Endothelial cell of umbilical vein (primary cell): ENCODE measurements at regions of chr2 and their contacts with region 1.

Region 1: GRCh38 chr2:172710584-172711024 is 25.0 kb upstream of the RAPGEF4 start:
- DNase-seq: peak; percentile 65
- H3K4me3 ChIP-seq: no peak overlapping the region
- H3K27ac ChIP-seq: no peak overlapping the region
- H3K4me1 ChIP-seq: no peaks in the 10 kb centered on the region
- H3K27me3 ChIP-seq: peaks cover 4 to 11% of the 10 kb centered on the region in 2 experiments
- CTCF ChIP-seq: peak; percentile 64 to 67
- POLR2A ChIP-seq: no peak

Region 2: GRCh38 chr2:172484253-172484652 is 226.4 kb before region 1 on chr2:
- CTCF ChIA-PET with region 1: interaction called, 23 read pairs
- POLR2A ChIA-PET with region 1: no interaction called
- dilution Hi-C with region 1: no loop called
- intact Hi-C with region 1: loop called (anchors 1 kb)
- DNase-seq: peak; percentile 55
- H3K4me3 ChIP-seq: no peak overlapping the region
- H3K27ac ChIP-seq: no peak overlapping the region
- H3K4me1 ChIP-seq: peaks cover 22% of the 10 kb centered on the region
- H3K27me3 ChIP-seq: no peaks in the 10 kb centered on the region
- CTCF ChIP-seq: no peak
- POLR2A ChIP-seq: no peak

Region 3: DNA sequence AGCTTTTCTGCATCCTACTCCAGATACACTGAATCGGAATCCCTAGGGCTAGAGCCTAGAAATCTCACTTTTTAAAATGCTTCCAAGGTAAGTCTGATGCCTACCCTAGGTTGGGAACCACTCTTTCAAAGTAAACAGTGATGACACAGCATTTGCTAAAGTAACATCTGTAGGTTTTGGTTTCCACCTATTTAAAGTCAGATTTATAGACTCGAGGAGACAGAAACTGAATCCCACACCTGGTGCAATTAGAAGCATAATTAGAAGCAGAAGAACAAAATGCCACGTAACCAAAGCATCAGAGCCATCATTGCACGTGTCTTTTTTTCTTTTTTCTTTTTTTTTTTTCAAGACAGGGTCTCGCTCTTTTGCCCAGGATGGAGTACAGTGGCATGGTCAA is 113.8 kb before region 1 on chr2:
- CTCF ChIA-PET with region 1: interaction called, 108 read pairs
- POLR2A ChIA-PET with region 1: no interaction called
- dilution Hi-C with region 1: no loop called
- intact Hi-C with region 1: loop called (anchors 1 kb)
- DNase-seq: no peak
- H3K4me3 ChIP-seq: no peak overlapping the region
- H3K27ac ChIP-seq: no peak overlapping the region
- H3K4me1 ChIP-seq: peaks cover 10% of the 10 kb centered on the region
- H3K27me3 ChIP-seq: no peaks in the 10 kb centered on the region
- CTCF ChIP-seq: no peak
- POLR2A ChIP-seq: no peak

Region 4: DNA sequence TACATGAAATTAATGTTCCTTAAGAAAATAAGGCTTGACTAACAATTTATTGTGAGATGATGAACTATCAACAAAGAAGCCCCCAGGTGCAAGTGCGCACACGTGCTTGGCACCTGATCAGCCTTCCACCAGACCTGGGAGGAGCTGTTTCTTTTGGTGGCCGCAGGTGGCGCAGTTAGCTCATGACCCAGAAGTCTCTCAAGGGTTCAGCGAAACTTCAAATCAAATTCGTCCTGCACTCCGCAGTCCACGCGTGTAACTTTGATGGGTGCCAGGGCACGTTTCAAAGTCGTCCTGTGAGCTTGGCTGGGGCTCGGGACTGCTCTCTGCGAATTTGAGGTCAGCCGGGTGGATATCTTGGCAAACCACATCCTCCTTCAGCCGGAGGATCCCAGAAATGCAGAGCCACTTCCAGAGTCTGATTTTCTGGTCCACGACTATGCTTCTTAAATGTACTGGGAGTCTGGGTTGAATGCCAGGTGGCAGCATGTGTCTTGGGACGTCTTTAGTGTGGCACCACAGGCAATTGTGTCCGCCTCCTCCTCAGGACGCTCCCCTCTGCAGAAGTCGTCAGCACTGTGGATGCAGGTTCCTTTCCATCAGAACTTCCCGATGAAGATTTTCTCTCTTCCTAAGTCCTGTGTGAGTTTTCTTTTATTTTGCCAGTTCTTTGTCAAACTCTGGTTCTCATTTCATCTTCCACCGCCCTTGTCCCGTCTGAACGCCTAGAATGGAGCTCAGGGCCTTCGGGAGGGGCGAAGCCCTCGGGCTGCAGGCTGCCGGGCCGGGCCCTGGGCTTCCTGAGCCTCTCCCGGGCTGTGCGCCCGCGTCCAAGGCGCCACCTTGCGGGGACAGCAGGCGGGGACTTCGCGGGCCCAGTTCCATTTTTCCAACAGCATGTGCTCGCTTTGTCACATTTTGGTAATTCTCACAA is 36.3 kb before region 1 on chr2:
- CTCF ChIA-PET with region 1: interaction called, 10 read pairs
- POLR2A ChIA-PET with region 1: no interaction called
- dilution Hi-C with region 1: no loop called
- intact Hi-C with region 1: no loop called
- DNase-seq: peak; percentile 45
- H3K4me3 ChIP-seq: no peak overlapping the region
- H3K27ac ChIP-seq: no peak overlapping the region
- H3K4me1 ChIP-seq: peaks cover 17% of the 10 kb centered on the region
- H3K27me3 ChIP-seq: no peaks in the 10 kb centered on the region
- CTCF ChIP-seq: peak; percentile 76 to 84
- POLR2A ChIP-seq: no peak

Region 5: DNA sequence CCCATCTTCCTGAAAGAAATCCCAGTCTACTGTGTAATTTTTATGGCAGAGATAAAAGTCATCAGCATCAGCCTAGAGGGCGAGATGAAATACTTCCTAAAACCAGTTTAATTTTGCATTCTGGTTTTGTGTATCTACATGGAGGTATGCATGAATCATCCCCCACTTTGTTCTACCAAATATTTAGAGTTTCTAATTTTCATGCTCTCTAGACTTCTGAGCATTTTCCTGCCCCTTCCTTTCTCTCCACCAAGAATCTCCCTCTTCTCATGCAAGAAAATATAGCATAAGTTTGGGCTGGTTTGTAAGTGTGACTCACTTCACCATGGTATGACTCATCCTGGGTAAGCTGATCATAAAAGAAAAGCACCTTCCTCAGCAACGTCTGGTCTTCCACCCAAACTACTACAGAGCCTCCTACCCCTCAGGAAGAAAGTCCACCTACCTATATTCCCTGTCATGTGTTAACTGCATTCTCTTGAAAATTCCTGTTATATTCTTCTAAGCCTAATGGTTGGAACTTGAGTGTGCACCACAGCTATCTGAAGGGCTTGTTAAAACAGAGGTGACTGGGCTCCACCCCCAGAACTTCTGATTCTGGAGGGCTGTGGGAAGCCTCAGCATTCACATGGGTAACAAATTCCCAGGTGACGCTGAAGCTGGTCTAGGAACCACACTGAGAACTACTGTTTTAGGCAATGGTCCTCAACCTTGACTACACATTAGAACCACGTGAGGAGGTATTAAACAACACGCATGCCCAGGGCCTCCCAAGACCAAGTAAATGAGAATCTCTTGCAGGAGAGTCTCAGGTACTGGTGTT is 12.4 kb before region 1 on chr2:
- CTCF ChIA-PET with region 1: interaction called, 18 read pairs
- POLR2A ChIA-PET with region 1: no interaction called
- dilution Hi-C with region 1: no loop called
- intact Hi-C with region 1: no loop called
- DNase-seq: peak; percentile 74
- H3K4me3 ChIP-seq: no peak overlapping the region
- H3K27ac ChIP-seq: no peak overlapping the region
- H3K4me1 ChIP-seq: peaks cover 24% of the 10 kb centered on the region
- H3K27me3 ChIP-seq: no peaks in the 10 kb centered on the region
- CTCF ChIP-seq: no peak
- POLR2A ChIP-seq: no peak

Region 6: GRCh38 chr2:172730411-172730810 is 19.8 kb after region 1 on chr2:
- CTCF ChIA-PET with region 1: interaction called, 10 read pairs
- POLR2A ChIA-PET with region 1: no interaction called
- dilution Hi-C with region 1: no loop called
- intact Hi-C with region 1: no loop called
- DNase-seq: no peak
- H3K4me3 ChIP-seq: no peak overlapping the region
- H3K27ac ChIP-seq: no peak overlapping the region
- H3K4me1 ChIP-seq: no peaks in the 10 kb centered on the region
- H3K27me3 ChIP-seq: peaks cover 18% of the 10 kb centered on the region in 2 experiments
- CTCF ChIP-seq: no peak
- POLR2A ChIP-seq: no peak

Region 7: DNA sequence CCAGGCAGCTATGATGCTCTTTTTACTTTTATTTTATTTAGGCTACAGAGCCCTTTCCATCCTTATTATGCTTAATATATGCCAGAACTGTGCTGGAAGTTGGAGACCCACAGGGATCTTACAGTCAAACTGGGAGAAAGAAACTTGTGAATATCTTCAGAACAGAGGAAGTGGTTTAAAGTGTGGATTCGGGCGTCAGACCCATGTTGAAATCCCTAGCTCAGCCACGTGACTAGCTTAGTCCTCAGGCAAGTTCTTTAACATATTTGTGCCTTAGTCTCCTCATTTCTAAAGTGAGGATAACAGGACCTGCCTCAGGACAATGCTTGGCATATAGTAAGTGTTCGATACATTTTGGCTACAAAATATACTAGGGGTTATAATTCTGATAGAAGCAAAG is 424.1 kb after region 1 on chr2:
- CTCF ChIA-PET with region 1: no interaction called
- POLR2A ChIA-PET with region 1: no interaction called
- dilution Hi-C with region 1: no loop called
- intact Hi-C with region 1: no loop called
- DNase-seq: no peak
- H3K4me3 ChIP-seq: no peak overlapping the region
- H3K27ac ChIP-seq: no peak overlapping the region
- H3K4me1 ChIP-seq: peaks cover 6% of the 10 kb centered on the region
- H3K27me3 ChIP-seq: no peaks in the 10 kb centered on the region
- CTCF ChIP-seq: no peak
- POLR2A ChIP-seq: no peak